Posterior vena cava (tissue), 2 donors: ENCODE measurements at regions of chr2 and their contacts with region 1.

Region 1: GRCh38 chr2:145481334-145481922 is 961.5 kb upstream of the ZEB2 start:
- DNase-seq: no peak

Region 2: GRCh38 chr2:145460151-145460550 is 21.3 kb before region 1 on chr2:
- intact Hi-C with region 1: loop called in 1 of 2 experiments (anchors 1 kb)
- DNase-seq: no peak